BJ (cell line): ENCODE measurements at regions of chr4 and their contacts with region 1.

Region 1: DNA sequence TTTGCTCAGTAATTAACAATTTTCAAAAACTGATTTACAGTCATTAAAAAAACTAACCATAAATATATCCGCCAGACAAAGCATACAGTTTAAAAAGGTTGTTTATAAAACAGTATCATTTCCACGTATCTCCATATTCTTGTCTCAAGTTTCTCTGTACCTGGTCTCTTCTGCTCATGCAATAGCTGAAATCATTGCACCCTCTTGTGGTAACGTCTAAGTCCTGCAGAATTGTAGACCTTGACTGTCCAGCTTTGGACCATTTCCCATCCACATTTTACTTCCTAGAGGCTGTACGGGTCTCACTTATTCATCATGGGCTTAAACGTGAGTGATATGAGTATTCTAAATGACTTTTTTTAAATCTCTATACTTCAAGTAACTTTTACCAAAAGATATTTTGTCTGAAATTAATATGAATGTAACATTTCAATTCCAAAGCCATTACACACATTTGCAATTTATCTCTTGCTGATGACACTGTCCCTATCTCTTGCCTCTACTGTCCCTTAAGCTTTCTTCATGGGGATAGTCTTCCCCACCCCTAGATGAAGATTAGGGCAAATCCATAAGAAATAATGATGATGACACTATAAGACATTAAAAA is 118.5 kb downstream of the BTC start:
- DNase-seq: no peak
- H3K4me3 ChIP-seq: no peak overlapping the region
- H3K27me3 ChIP-seq: no peaks in the 10 kb centered on the region
- CTCF ChIP-seq: peak; percentile 83

Region 2: DNA sequence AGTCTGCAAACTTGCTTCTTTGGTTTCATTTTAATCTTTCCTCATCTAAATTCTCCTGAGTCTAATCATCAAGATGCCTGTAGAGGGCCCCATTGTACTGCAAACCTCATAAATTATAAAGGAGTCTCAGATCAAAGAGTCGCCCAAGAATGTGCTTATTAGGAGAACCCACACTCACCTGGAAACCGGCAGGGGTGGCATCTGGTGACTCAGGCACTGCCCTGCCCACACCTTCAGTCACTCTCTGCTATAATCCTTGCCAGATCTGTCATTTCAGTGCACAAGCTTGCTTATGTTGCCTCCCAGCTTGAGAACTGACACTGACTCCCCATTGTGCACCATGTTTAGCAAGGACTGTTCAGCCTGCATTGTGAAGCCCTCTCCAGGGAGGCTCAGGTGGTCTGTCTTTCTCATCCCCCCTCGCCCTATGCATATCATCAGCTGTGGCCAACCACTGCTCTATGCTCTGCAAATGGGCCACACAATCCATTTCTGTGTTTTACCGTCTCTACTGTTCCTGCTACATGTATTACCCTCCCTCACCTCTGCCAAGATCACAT is 355.1 kb before region 1 on chr4:
- CTCF ChIA-PET with region 1: interaction called, 175 read pairs
- POLR2A ChIA-PET with region 1: no interaction called
- DNase-seq: no peak
- H3K4me3 ChIP-seq: no peak overlapping the region
- H3K27me3 ChIP-seq: 0 out of 2 replicates have a peak, but pooled peaks cover 1% of the 10 kb centered on the region
- CTCF ChIP-seq: peak; percentile 61

Region 3: GRCh38 chr4:74364652-74365491 is 310.9 kb before region 1 on chr4 and contains the start of gene EREG:
- CTCF ChIA-PET with region 1: interaction called, 97 read pairs
- POLR2A ChIA-PET with region 1: no interaction called
- DNase-seq: peak; percentile 31
- H3K4me3 ChIP-seq: peak within 1 kb of the TSS; percentile 44
- H3K27me3 ChIP-seq: peaks cover 3% of the 10 kb centered on the region; the same call in 1 of the 2 replicates
- CTCF ChIP-seq: no peak
- polyA plus RNA-seq, gene EREG: 0.40 and 0.48 TPM in 2 replicates

Region 4: DNA sequence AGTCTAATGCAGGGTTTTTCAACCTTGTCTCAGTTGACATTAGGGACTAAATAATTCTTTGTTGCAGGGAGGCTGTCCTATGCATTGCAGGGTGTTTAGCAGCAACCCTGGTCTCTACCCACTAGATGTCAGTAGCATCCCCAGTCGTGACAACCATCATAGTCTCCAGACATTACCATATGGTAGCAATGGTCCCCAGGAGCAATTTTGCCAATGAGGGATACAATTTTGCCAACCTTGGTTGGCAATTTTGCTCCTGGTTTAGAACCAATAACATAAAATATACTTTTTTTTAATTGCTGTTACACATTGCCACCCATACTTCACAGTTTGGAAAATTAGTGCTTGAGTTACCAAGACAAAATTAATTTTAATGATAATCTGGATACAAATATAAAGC is 304.9 kb before region 1 on chr4:
- CTCF ChIA-PET with region 1: interaction called, 172 read pairs
- POLR2A ChIA-PET with region 1: no interaction called
- DNase-seq: no peak
- H3K4me3 ChIP-seq: no peak overlapping the region
- H3K27me3 ChIP-seq: no peaks in the 10 kb centered on the region
- CTCF ChIP-seq: peak; percentile 87

Region 5: DNA sequence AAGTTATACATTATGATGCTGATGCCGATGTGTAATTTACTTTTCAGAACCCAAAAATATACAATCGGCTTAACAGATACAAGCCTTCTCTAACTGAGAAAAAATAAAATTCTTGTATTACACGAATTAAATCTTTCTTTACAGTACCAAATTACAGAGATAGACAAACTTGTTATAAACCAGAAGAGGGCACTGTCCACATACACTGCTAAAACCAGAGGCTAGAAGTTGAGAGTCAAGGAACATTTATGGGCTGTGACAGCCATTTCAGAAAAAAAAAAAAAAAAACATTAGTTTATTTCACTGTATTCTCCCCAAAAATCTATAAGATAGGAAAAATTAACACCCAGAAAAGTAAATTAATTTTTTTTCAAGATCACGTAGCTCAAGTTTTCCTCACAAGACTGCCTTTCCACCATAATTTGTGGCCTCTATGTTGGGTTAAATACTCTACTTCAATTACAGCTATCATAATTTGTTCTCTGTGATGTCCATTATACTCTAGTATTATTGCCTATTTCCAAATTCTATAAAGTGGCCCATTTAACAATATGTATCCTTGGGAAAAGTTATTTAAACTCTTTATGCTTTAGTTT is 298.8 kb before region 1 on chr4:
- CTCF ChIA-PET with region 1: interaction called, 172 read pairs
- POLR2A ChIA-PET with region 1: no interaction called
- DNase-seq: no peak
- H3K4me3 ChIP-seq: no peak overlapping the region
- H3K27me3 ChIP-seq: no peaks in the 10 kb centered on the region
- CTCF ChIP-seq: peak; percentile 60

Region 6: GRCh38 chr4:74665377-74665776 is 10.4 kb before region 1 on chr4:
- CTCF ChIA-PET with region 1: interaction called, 26 read pairs
- POLR2A ChIA-PET with region 1: no interaction called
- DNase-seq: no peak
- H3K4me3 ChIP-seq: no peak overlapping the region
- H3K27me3 ChIP-seq: no peaks in the 10 kb centered on the region
- CTCF ChIP-seq: no peak